ENCODE measurements at regions of chr5 and their contacts with region 1.

Region 1: DNA sequence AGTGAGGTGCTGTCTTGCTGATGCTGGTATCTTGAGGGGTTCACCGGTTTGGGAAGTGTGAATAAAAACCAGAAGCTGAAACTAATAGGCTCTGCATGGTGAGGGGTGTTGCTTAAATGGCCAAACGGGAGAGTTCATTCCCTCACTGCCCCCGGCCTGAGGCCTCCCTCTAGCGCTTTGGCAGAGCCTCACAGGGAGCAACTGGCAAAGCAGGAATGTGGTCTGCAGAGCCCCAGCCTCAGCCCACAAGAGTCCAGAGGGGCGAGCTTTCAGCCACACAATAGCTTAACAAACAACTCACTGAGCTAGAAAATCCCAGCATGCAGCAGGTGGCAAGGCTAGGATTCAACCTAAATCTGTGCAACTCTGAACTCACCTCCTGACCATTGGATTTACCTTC is 234.8 kb downstream of the MED10 start:
- DNase-seq: no peak
- H3K4me3 ChIP-seq: no peak overlapping the region
- H3K27ac ChIP-seq: no peak overlapping the region
- H3K4me1 ChIP-seq: no peaks in the 10 kb centered on the region
- H3K27me3 ChIP-seq: no peaks in the 10 kb centered on the region
- CTCF ChIP-seq: no peak
- POLR2A ChIP-seq: no peak

Region 2: DNA sequence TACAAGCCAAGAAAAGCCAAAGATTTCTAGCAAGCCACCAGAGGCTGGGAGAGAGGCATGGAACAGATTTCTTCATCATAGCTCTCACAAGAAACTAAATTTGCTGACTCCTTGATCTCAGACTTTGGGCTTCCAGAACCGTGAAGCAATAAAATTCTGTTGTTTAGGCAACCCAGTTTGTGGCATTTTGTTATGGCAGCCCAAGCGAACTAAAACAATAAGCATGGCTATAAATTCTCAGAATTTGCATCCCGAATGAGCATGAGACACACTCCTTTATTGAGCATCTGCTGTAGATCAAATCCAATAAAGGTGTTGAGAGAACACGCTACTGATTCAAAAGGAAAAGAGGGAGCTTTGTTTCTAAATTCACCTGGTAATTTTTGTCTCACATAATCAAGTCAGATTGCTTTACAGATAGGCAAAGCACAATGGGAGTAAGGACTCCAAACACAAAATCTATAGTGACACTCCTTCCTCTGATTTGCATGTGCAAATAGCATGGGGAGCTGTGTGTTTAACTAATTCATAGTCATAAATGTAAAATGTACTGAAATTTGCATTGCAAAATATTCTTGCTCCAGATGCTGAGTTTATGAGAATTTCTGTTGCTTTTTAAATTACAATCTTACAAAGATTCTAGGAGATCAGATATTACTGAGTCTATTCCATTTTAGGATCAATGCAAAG is 73.9 kb before region 1 on chr5:
- intact Hi-C with region 1: loop called (anchors 2 kb)
- DNase-seq: no peak
- H3K4me3 ChIP-seq: no peak overlapping the region
- H3K27ac ChIP-seq: no peak overlapping the region
- H3K4me1 ChIP-seq: no peaks in the 10 kb centered on the region
- H3K27me3 ChIP-seq: no peaks in the 10 kb centered on the region
- CTCF ChIP-seq: no peak
- POLR2A ChIP-seq: no peak

Region 3: DNA sequence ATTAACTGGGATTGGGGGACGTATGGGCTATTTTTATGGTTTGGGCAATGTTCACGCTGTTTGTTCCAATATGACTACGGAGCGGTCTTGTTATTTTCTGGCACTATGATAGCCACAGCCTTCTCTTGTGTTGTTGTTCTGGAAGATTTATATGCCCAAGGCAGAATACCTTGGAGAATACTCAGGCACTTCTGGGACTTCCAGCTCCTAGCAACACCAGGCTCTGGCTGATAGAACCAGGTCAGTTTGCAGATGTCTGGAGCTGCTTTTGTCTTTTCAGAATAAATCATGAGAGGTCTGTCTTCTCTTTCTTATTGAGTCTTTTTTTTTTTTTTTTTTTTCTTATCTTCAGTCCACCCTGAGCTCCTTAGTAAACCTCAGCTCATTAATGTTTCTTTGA is 27.7 kb before region 1 on chr5:
- intact Hi-C with region 1: no loop called
- DNase-seq: no peak
- H3K4me3 ChIP-seq: no peak overlapping the region
- H3K27ac ChIP-seq: no peak overlapping the region
- H3K4me1 ChIP-seq: no peaks in the 10 kb centered on the region
- H3K27me3 ChIP-seq: no peaks in the 10 kb centered on the region
- CTCF ChIP-seq: no peak
- POLR2A ChIP-seq: no peak

Measured in breast epithelium (tissue), 4 donors.